ENCODE measurements at regions of chr3 and their contacts with region 1.

Region 1: DNA sequence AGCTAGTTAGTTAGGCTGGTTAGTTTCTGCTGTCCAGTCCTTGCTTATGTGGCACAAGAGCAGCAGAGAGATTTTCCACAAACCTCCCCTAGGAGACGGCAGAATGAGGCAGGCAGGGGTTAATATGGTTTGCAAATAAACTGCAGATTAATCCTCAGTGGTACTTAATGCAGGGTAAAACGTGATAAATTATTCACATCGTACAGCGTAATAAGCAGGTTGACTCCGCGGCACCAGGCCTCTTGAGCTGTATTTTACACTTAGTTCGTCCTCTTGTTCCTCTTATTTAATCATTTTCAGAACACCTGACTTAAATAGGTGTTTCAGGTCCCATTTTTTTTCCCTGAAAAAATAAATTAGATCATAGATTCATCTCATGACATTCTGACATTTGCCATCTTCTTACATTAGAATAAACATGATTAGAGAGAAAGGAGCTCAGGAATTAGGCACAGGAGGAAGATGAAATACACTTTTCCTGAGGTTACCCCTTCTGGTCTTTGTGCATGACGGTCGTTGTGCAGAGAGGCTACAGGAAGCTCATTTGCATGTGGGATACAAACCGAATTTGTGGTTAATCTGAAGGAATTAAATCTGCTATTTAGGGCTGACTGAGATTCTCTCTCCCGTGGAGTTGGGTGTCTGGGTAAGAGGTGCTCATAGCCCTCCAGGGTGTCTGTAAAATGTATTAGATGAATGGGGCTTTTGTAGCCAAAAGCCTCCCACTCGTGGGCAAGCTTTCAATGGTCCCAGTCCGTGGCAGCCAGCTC is 27.1 kb upstream of the VPS8 start:
- DNase-seq: no peak
- H3K4me3 ChIP-seq: no peak overlapping the region
- H3K27ac ChIP-seq: no peak overlapping the region
- H3K4me1 ChIP-seq: peaks cover 0 to 4% of the 10 kb centered on the region in 2 donors
- H3K27me3 ChIP-seq: no peaks in the 10 kb centered on the region
- CTCF ChIP-seq: no peak
- POLR2A ChIP-seq: no peak

Region 2: DNA sequence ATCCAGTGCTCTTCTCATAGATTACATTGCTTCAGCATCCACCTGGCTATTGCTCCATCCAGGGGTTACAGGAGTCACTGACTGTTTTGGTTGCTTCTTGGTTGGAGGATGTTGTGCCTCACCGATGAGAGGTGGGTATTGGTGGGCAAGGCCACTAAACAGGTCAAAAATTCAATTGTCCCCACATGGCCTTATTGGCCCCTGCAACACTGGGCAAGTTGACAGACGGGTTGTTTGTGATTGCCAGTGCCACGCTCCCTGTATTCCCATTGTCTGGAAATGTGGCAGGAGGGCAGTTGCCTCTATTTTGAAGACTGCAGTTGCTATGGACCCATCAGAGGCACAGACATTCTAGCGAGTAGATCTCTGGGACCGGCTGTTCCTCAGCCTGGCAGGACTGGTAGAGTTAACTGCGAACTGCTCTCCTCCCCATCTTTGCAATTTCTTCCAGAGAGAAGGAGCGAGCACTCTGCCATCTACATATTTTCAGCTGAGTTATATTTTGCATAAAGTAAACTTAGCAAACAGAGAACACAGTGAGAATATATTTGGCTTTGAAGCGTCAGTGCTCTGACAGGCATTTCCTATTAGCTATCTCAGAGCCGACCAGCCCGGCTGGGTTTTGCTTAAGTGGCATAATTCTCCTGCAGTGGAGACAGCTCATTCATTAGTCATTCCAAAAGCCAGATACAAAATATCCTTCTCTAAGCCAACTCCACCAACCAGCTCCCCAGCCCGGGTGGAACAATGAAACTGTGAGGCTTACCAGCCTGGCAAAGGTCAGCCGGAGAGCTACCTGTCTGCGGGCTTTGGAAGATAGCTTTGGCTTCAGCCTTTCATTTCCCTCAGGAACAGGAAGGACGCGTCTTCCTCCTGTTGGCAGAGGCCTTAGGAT is 47.0 kb before region 1 on chr3:
- intact Hi-C with region 1: loop called (anchors 5 kb)
- DNase-seq: peak; percentile 3 to 7
- H3K4me3 ChIP-seq: no peak overlapping the region
- H3K27ac ChIP-seq: no peak overlapping the region
- H3K4me1 ChIP-seq: no peaks in the 10 kb centered on the region
- H3K27me3 ChIP-seq: no peaks in the 10 kb centered on the region
- CTCF ChIP-seq: no peak
- POLR2A ChIP-seq: no peak

Measured in uterus (tissue), 4 donors.